Prostate gland (tissue), 2 donors: ENCODE measurements at regions of chr15 and their contacts with region 1.

Region 1: GRCh38 chr15:63610200-63610841 is 13.1 kb downstream of the FBXL22 start:
- DNase-seq: peak; percentile 75
- H3K4me3 ChIP-seq: no peak overlapping the region
- H3K27ac ChIP-seq: peak overlapping the region; percentile 55 to 70
- H3K4me1 ChIP-seq: peaks cover 10% of the 10 kb centered on the region
- H3K27me3 ChIP-seq: no peaks in the 10 kb centered on the region
- CTCF ChIP-seq: peak; percentile 42 to 82 (median 70)
- POLR2A ChIP-seq: no peak

Region 2: GRCh38 chr15:63640146-63640545 is 29.8 kb after region 1 on chr15:
- intact Hi-C with region 1: no loop called
- DNase-seq: no peak
- H3K4me3 ChIP-seq: no peak overlapping the region
- H3K27ac ChIP-seq: no peak overlapping the region
- H3K4me1 ChIP-seq: no peaks in the 10 kb centered on the region
- H3K27me3 ChIP-seq: no peaks in the 10 kb centered on the region
- CTCF ChIP-seq: no peak
- POLR2A ChIP-seq: no peak

Region 3: GRCh38 chr15:63891079-63891767 is 280.9 kb after region 1 on chr15:
- intact Hi-C with region 1: loop called (anchors 10 kb)
- DNase-seq: peak; percentile 70
- H3K4me3 ChIP-seq: no peak overlapping the region
- H3K27ac ChIP-seq: no peak overlapping the region
- H3K4me1 ChIP-seq: no peaks in the 10 kb centered on the region
- H3K27me3 ChIP-seq: no peaks in the 10 kb centered on the region
- CTCF ChIP-seq: peak; percentile 72 to 87 (median 85)
- POLR2A ChIP-seq: no peak

Region 4: DNA sequence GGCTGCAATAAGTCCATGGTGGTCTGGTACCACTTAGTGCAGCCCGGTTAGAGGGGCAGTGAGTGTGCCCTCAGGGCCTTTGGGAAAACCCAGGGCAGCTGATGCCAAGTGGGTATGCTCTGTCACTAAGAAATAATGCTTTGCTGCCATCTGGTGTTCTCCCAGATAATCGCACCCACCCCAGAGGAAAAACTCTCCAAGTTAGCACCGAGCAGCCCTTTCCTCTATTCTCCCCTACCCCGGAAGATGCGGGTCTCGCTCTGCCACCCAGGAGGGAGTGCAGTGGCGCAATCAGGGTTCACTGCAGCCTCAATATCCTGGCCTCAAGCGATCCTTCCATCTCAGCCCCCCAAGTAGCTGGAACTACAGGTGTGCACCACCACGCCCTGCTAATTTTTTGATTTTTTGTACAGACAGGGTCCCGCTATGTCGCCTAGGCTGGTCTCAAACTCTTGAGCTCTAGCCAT is 457.3 kb after region 1 on chr15:
- intact Hi-C with region 1: loop called (anchors 5 kb)
- DNase-seq: peak; percentile 57
- H3K4me3 ChIP-seq: no peak overlapping the region
- H3K27ac ChIP-seq: peak overlapping the region; percentile 44 to 49
- H3K4me1 ChIP-seq: peaks cover 11% of the 10 kb centered on the region
- H3K27me3 ChIP-seq: no peaks in the 10 kb centered on the region
- CTCF ChIP-seq: peak; percentile 74 to 89 (median 84)
- POLR2A ChIP-seq: no peak